Posterior cingulate gyrus (tissue), 11 donors: ENCODE measurements at regions of chr10 and their contacts with region 1.

Region 1: GRCh38 chr10:101095542-101096213 is 33.9 kb downstream of the KAZALD1 start:
- DNase-seq: peak in 9 of 10 donors; percentile 15 to 90 (median 47)

Region 2: GRCh38 chr10:100775386-100775785 is 320.3 kb before region 1 on chr10:
- intact Hi-C with region 1: no loop called
- DNase-seq: peak in 1 of 10 donors; percentile 55

Region 3: DNA sequence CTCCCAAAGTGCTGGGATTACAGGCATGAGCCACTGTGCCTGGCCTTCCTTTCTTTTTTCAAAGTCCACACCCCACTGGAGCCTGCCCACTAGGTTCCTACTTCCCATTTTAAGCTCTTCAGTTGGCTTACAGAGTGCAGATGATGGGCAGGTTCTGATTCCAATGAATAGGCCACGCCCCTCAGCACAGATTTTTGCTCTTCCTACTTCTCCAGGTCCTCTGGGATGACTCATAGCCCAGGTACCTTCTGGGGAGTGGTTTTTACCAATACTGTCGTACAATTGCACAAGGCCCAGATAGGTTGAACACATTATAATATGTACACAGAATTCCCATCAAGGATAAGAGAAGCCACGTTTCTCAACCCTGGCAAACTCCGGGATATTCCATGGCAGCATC is 22.9 kb after region 1 on chr10:
- intact Hi-C with region 1: no loop called
- DNase-seq: peak in 2 of 10 donors; percentile 2 to 14

Region 4: GRCh38 chr10:101141616-101142532 is 46.2 kb after region 1 on chr10:
- intact Hi-C with region 1: loop called (anchors 1 kb)
- DNase-seq: peak; percentile 58 to 97 (median 80)